Endothelial cell of umbilical vein (primary cell): ENCODE measurements at regions of chr7 and their contacts with region 1.

Region 1: GRCh38 chr7:29557954-29558353 is 5.7 kb upstream of the PRR15 start:
- DNase-seq: no peak
- H3K4me3 ChIP-seq: no peak overlapping the region
- H3K27ac ChIP-seq: no peak overlapping the region
- H3K4me1 ChIP-seq: peaks cover under 1% of the 10 kb centered on the region
- H3K27me3 ChIP-seq: peaks cover 2 to 6% of the 10 kb centered on the region in 2 experiments
- CTCF ChIP-seq: no peak
- POLR2A ChIP-seq: no peak

Region 2: GRCh38 chr7:29538389-29538788 is 19.6 kb before region 1 on chr7:
- CTCF ChIA-PET with region 1: no interaction called
- POLR2A ChIA-PET with region 1: no interaction called
- dilution Hi-C with region 1: no loop called
- intact Hi-C with region 1: loop called (anchors 2 kb)
- DNase-seq: no peak
- H3K4me3 ChIP-seq: no peak overlapping the region
- H3K27ac ChIP-seq: no peak overlapping the region
- H3K4me1 ChIP-seq: no peaks in the 10 kb centered on the region
- H3K27me3 ChIP-seq: no peaks in the 10 kb centered on the region
- CTCF ChIP-seq: no peak
- POLR2A ChIP-seq: no peak

Region 3: DNA sequence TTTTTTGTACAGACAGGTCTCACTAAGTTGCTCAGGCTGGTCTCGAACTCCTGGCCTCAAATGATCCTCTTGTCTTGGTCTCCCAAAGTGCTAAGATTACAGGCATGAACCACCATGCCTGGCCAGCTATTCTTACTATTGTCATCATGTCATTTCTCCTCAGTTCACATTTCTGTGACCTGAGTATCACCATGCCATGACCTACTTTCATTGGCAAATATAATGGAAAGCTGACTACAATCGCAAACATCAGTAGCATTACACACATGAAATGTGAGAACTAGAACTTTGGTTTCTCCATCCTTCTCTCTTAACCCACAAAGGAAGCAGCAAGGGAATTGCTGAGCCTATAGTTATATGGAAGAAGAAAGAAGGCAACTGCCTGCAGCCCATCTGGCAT is 222.4 kb after region 1 on chr7:
- CTCF ChIA-PET with region 1: no interaction called
- POLR2A ChIA-PET with region 1: no interaction called
- dilution Hi-C with region 1: no loop called
- intact Hi-C with region 1: no loop called
- DNase-seq: no peak
- H3K4me3 ChIP-seq: no peak overlapping the region
- H3K27ac ChIP-seq: no peak overlapping the region
- H3K4me1 ChIP-seq: no peaks in the 10 kb centered on the region
- H3K27me3 ChIP-seq: peaks cover 15 to 16% of the 10 kb centered on the region in 2 experiments
- CTCF ChIP-seq: no peak
- POLR2A ChIP-seq: no peak